ENCODE measurements at regions of chr4 and their contacts with region 1.

Region 1: GRCh38 chr4:163554870-163555465 is 60.5 kb downstream of the TMA16 start:
- DNase-seq: no peak
- ATAC-seq: no peak

Region 2: DNA sequence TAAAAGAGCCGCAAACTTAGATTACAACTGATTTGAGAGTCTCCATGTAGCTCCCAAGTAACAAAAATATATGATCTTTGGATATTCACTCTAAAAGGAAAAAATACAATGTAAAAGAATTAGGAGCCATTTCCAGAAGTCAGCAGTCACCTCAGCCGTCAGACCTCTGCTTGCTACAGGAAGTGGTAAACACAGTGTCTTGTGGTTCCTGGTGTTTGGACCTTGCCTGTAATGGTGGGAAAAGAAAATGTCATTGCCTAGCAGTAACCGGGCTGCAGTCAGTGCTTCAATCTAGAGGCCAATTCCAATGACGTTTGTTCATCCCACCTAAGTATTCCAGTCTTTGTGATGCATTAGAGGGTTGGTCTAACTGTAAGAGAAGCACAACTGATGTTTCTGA is 1170.1 kb after region 1 on chr4:
- intact Hi-C with region 1: loop called (anchors 10 kb)
- DNase-seq: no peak
- ATAC-seq: no peak

Region 3: DNA sequence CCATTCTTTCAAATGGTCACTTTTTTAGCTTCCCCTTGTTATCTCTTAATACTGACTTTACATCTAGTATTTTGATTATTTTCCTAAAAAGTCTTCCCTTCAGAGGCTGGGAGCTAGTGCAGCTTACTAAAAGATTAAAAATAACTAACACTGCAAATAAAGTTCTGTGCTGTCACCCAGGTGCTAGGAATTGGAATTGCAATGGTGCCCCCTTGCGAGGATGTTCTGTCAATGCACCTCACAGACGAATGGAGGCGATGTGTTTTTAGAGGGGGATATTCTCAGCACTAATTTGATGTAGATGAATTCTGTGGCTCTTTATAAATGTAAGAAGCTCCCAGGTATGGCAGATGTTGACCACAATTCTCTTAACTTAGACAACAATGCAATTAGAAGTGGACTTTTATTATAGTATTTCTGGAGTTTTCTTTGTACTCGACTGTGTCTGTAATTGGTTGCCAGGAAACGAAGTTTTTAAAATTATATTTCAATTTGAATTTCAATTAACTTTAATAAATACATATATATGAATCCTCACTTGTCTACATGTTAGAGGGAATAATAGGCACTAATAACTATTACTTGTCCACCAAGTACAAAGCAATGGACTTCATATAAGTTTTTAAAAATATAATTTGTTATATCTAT is 1177.0 kb after region 1 on chr4:
- intact Hi-C with region 1: loop called (anchors 10 kb)
- DNase-seq: peak in 1 of 2 donors; percentile 23
- ATAC-seq: peak; percentile 38